CD14-positive monocyte (primary cell): ENCODE measurements at regions of chr16 and their contacts with region 1.

Region 1: DNA sequence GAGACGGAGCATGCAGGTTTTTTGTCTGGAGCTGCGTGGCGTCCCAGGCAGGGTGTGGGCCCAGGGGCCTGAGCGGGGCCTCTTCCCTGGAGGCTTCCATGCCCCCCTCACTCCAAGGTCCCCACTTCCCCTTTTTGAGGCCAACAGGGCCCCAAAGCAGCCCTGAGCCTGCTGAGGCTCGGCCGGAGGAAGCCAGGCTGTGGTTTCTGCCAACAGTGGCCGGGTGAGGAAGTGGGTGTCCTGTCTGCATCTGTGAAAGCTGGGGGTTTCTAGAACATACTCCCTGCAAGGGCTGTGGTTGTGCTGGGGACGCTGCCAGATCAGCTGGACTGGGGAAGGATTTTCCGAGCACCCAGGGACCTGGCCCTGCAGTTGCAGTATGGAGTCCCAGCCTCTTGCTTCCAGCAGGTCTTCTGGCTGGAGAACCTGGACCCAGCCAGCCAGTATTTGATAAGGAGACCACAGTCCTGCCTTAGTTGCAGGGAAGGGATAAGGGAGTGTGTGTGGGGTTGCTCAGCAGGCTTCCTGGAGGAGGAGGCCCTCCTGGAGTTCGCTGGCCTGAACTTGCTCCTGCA is 15.7 kb downstream of the ADCY7 start:
- DNase-seq: peak; percentile 94 to 97 (median 94)
- H3K4me3 ChIP-seq: peak overlapping the region; percentile 41 to 86 (median 55)
- H3K4me3 Mint-ChIP-seq: peak overlapping the region; percentile 74 to 90
- H3K27ac ChIP-seq: peak overlapping the region; percentile 86 to 97
- H3K27ac Mint-ChIP-seq: peak overlapping the region; percentile 93 to 100 (median 98)
- H3K4me1 ChIP-seq: peaks cover 88 to 92% of the 10 kb centered on the region in 2 donors
- H3K4me1 Mint-ChIP-seq: peaks cover 85% of the 10 kb centered on the region
- H3K27me3 ChIP-seq: no peaks in the 10 kb centered on the region
- H3K27me3 Mint-ChIP-seq: no peaks in the 10 kb centered on the region
- CTCF ChIP-seq: no peak

Region 2: DNA sequence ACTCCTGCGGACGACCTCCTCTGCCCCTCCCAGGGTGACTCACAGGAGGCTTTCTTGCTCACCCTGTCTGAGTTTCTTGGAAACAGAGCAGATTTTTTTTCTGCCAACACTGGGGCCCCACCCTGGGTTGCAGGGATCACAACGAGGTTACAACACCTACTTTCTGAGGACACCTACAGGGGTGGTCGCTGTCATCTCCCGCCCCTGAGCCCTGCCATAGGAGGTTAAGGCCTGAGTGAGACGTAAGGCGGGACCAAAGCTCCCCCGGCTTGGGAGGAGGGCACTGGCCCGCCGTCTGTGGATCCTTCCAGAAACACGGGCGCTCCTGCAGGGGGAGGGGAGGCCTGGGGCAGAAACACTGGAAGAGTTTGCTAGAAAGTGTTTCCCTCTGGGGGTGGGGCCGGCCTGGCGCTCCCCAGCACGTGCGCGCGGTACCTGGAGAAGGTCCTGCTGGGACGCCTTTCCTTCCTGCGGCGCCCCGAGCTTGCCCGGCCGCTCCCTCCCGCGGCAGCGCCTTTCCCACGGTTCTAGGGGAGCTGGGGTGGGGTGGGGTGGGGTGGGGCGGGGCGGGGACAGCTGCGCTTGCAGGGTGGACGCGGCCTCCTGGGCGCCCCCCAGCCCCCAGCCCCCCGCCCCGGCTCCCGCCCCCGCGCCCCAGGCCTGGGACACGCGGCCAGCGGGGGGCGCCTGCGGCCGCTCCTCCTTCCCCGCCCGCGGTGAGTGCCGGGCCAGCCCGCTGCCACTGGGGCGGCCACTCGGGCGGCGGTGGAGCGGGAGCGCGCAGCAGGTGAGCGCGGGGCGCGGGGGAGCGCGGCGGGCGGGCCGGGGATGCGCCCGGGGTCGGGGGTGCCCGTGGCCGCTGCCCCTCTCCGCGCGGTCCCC is 36.4 kb before region 1 on chr16:
- intact Hi-C with region 1: loop called (anchors 2 to 5 kb)
- DNase-seq: peak; percentile 48 to 68 (median 50)
- H3K4me3 ChIP-seq: peak overlapping the region; percentile 81 to 88 (median 87)
- H3K4me3 Mint-ChIP-seq: peak overlapping the region; percentile 76 to 84
- H3K27ac ChIP-seq: no peak overlapping the region
- H3K27ac Mint-ChIP-seq: peak overlapping the region in 5 of 7 donors; percentile 4 to 61 (median 53)
- H3K4me1 ChIP-seq: peaks cover 32 to 57% of the 10 kb centered on the region in 2 donors
- H3K4me1 Mint-ChIP-seq: peaks cover 46% of the 10 kb centered on the region
- H3K27me3 ChIP-seq: no peaks in the 10 kb centered on the region
- H3K27me3 Mint-ChIP-seq: peaks cover 0 to 3% (median 3%) of the 10 kb centered on the region in 3 donors
- CTCF ChIP-seq: peak; percentile 50